Activated CD4-positive, alpha-beta T cell treated with anti-CD3 and anti-CD28 coated beads for 36 hours (primary cell): ENCODE measurements at regions of chr14 and their contacts with region 1.

Region 1: DNA sequence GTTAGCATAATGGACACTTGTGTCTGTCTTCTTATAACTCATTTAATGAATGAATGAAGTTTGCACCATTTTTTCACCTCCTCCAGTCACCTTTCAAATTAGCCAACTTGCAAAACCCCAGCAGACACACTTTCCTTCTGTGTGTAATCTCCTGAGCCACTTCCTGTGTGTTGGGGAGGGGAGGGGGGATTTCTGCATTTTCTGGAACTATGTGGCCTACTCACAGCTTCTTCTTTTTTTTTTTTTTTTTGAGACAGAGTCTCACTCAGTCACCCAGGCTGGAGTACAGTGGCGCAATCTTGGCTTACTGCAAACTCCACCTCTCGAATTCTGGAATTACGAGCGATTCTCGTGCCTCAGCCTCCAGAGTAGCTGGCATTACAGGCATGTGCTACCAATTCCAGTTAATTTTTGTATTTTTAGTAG is 4.1 kb upstream of the SERPINA1 start:
- DNase-seq: peak; percentile 84
- ATAC-seq: peak; percentile 67
- H3K4me3 Mint-ChIP-seq: no peak overlapping the region
- H3K27ac Mint-ChIP-seq: peak overlapping the region; percentile 97
- H3K4me1 Mint-ChIP-seq: peaks cover 70% of the 10 kb centered on the region
- H3K27me3 Mint-ChIP-seq: peaks cover 5% of the 10 kb centered on the region

Region 2: GRCh38 chr14:94337274-94337673 is 55.2 kb before region 1 on chr14:
- CTCF ChIA-PET with region 1: interaction called, 7 read pairs
- POLR2A ChIA-PET with region 1: interaction called, 23 read pairs
- intact Hi-C with region 1: loop called (anchors 1 kb)
- DNase-seq: peak; percentile 43
- ATAC-seq: no peak
- H3K4me3 Mint-ChIP-seq: no peak overlapping the region
- H3K27ac Mint-ChIP-seq: peak overlapping the region; percentile 14
- H3K4me1 Mint-ChIP-seq: peaks cover 37% of the 10 kb centered on the region
- H3K27me3 Mint-ChIP-seq: peaks cover 8% of the 10 kb centered on the region

Region 3: DNA sequence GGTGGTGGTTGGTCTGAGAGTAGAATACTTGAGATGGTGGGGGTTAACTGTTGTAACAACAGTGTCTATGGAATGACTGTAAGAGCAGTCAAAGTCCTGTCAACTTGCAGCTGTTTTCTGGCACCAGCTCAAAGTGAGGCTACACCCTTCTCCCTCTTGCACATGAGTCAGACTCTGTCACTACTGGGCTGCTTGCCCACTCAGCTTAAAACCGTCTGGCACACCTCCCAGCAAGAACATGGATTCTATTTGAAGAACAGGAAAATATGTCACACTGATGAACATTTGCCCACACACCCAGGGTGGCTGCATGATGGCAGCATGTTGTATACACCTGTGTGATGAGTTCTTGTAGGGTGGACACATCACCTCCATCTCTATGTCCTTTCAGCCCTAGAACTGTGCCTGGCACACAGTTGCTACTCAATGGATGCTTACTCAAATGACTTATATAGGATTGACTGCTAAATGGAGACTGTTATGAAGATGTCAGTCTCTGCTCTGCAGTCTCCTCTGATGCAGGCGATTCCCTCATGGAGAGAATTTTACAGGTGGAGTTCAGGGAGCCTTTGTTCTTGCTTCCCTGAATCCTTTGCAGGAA is 50.1 kb before region 1 on chr14:
- CTCF ChIA-PET with region 1: interaction called, 7 read pairs
- POLR2A ChIA-PET with region 1: interaction called, 41 read pairs
- intact Hi-C with region 1: loop called (anchors 1 kb)
- DNase-seq: peak; percentile 77
- ATAC-seq: peak; percentile 71
- H3K4me3 Mint-ChIP-seq: no peak overlapping the region
- H3K27ac Mint-ChIP-seq: peak overlapping the region; percentile 93
- H3K4me1 Mint-ChIP-seq: peaks cover 79% of the 10 kb centered on the region
- H3K27me3 Mint-ChIP-seq: peaks cover 2% of the 10 kb centered on the region

Region 4: GRCh38 chr14:95265106-95266094 is 872.9 kb after region 1 on chr14:
- CTCF ChIA-PET with region 1: no interaction called
- POLR2A ChIA-PET with region 1: no interaction called
- intact Hi-C with region 1: loop called in 1 of 2 experiments (anchors 5 kb)
- DNase-seq: peak; percentile 66
- ATAC-seq: peak; percentile 83
- H3K4me3 Mint-ChIP-seq: no peak overlapping the region
- H3K27ac Mint-ChIP-seq: peak overlapping the region; percentile 35
- H3K4me1 Mint-ChIP-seq: peaks cover 39% of the 10 kb centered on the region
- H3K27me3 Mint-ChIP-seq: no peaks in the 10 kb centered on the region